AG04450 (cell line): ENCODE measurements at regions of chr1 and their contacts with region 1.

Region 1: DNA sequence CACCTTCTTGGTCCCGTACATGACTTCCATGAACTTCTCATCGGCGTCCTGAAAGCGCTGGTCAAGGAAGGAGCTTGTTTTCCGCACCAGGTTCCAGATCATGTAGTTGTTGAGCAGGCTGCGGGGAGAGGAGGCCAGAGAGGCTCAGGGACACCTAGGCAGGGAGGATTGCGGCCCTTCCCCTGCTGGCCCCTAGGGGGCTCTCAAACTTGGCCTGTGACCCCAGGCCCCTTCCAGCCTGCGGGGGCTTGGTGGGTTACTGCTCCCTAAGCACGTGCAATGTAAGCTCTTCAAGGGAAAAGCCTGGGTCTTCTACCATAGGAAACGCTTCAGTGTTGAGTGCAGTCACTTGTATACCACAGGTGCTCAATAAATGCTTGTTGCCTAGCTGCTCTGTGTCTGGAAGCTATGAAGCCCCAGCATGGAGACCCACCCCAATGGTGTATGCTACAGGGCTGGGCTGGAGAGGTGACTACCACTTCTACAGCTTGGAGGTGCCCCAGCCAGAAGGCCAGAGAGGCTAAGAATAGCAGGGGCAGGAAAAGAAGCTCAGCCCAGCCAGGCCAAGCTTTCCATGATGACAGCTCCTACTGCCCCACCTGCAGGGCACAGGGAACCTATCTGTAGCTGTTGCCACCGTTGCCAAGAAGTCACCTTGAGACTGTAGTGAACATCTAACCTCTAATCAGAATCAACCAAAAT is 45.1 kb downstream of the ECE1 start:
- DNase-seq: no peak
- H3K4me3 ChIP-seq: no peak overlapping the region
- H3K27ac ChIP-seq: no peak overlapping the region
- H3K27me3 ChIP-seq: no peaks in the 10 kb centered on the region
- CTCF ChIP-seq: peak; percentile 54

Region 2: GRCh38 chr1:21034725-21035628 is 210.2 kb before region 1 on chr1:
- CTCF ChIA-PET with region 1: no interaction called
- POLR2A ChIA-PET with region 1: no interaction called
- DNase-seq: no peak
- H3K4me3 ChIP-seq: no peak overlapping the region
- H3K27ac ChIP-seq: no peak overlapping the region
- H3K27me3 ChIP-seq: no peaks in the 10 kb centered on the region
- CTCF ChIP-seq: no peak

Region 3: GRCh38 chr1:21232044-21232443 is 13.1 kb before region 1 on chr1:
- CTCF ChIA-PET with region 1: interaction called, 17 read pairs
- POLR2A ChIA-PET with region 1: interaction called, 3 read pairs
- DNase-seq: no peak
- H3K4me3 ChIP-seq: no peak overlapping the region
- H3K27ac ChIP-seq: no peak overlapping the region
- H3K27me3 ChIP-seq: no peaks in the 10 kb centered on the region
- CTCF ChIP-seq: peak; percentile 77

Region 4: GRCh38 chr1:21537932-21538630 is 292.9 kb after region 1 on chr1:
- CTCF ChIA-PET with region 1: interaction called, 12 read pairs
- POLR2A ChIA-PET with region 1: no interaction called
- DNase-seq: no peak
- H3K4me3 ChIP-seq: no peak overlapping the region
- H3K27ac ChIP-seq: no peak overlapping the region
- H3K27me3 ChIP-seq: peaks cover 32% of the 10 kb centered on the region
- CTCF ChIP-seq: no peak